A673 (cell line): ENCODE measurements at regions of chr6 and their contacts with region 1.

Region 1: GRCh38 chr6:8382434-8382833 is 52.9 kb downstream of the SLC35B3 start:
- DNase-seq: no peak
- H3K4me3 ChIP-seq: no peak overlapping the region
- H3K27ac ChIP-seq: peak overlapping the region; percentile 26
- H3K4me1 ChIP-seq: no peaks in the 10 kb centered on the region
- H3K27me3 ChIP-seq: no peaks in the 10 kb centered on the region
- CTCF ChIP-seq: no peak

Region 2: GRCh38 chr6:8400663-8401062 is 18.2 kb after region 1 on chr6:
- CTCF ChIA-PET with region 1: no interaction called
- POLR2A ChIA-PET with region 1: no interaction called
- intact Hi-C with region 1: loop called (anchors 1 kb)
- DNase-seq: no peak
- H3K4me3 ChIP-seq: no peak overlapping the region
- H3K27ac ChIP-seq: no peak overlapping the region
- H3K4me1 ChIP-seq: no peaks in the 10 kb centered on the region
- H3K27me3 ChIP-seq: no peaks in the 10 kb centered on the region
- CTCF ChIP-seq: no peak

Region 3: DNA sequence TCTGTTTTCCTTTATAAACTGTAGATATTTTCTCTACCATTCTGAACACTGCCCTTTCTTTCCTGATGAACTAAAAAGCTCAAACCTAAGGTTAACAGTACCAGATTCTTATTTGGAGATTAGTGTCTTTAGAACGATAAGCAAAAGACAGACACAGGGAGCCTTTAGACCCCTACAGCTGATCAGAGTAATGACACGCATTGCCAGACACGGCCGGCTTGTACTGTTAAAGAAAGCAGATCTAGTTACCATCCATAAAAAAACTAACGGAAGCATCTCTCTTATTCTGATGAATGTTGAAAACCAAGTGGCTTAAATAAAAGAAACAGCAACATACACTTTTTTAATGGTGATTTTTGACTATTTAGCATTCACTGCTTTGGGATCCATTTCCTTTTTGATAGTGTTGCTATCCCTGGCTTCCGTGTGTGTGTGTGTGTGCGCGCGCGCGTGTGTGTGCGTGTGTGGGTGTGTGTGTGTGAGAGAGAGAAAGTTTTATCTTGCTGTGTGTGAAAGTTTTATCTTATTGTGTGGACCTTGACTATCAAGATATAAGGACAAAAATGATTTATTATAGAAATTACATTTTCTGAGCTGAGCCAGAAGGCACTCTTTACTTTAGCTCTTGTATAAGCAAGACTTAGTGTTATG is 148.5 kb after region 1 on chr6:
- CTCF ChIA-PET with region 1: no interaction called
- POLR2A ChIA-PET with region 1: no interaction called
- intact Hi-C with region 1: no loop called
- DNase-seq: peak; percentile 47
- H3K4me3 ChIP-seq: no peak overlapping the region
- H3K27ac ChIP-seq: no peak overlapping the region
- H3K4me1 ChIP-seq: peaks cover 5% of the 10 kb centered on the region
- H3K27me3 ChIP-seq: no peaks in the 10 kb centered on the region
- CTCF ChIP-seq: peak; percentile 35; the same call in 1 of the 2 replicates

Region 4: DNA sequence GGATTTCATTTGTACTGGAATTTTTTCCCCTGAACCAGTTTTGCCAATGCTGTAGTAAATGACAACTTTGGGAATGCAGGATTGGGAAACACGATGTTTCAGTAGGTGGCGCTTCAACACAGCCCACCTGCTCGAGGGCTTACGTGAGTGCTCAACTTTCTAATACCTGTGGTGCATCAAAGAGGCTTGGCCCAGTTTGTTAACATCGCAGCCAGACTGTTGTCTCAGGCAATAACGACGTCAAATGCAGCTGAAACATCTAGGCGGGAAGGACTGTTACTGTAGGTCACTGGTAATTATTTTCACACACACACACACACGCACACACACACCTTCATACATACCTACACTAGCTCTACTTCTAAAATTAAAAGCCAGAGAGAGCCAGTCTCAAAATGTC is 868.4 kb after region 1 on chr6:
- CTCF ChIA-PET with region 1: no interaction called
- POLR2A ChIA-PET with region 1: no interaction called
- intact Hi-C with region 1: no loop called
- DNase-seq: peak; percentile 59
- H3K4me3 ChIP-seq: no peak overlapping the region
- H3K27ac ChIP-seq: no peak overlapping the region
- H3K4me1 ChIP-seq: peaks cover 7% of the 10 kb centered on the region
- H3K27me3 ChIP-seq: no peaks in the 10 kb centered on the region
- CTCF ChIP-seq: peak; percentile 70